ENCODE measurements at regions of chr11 and their contacts with region 1.

Region 1: DNA sequence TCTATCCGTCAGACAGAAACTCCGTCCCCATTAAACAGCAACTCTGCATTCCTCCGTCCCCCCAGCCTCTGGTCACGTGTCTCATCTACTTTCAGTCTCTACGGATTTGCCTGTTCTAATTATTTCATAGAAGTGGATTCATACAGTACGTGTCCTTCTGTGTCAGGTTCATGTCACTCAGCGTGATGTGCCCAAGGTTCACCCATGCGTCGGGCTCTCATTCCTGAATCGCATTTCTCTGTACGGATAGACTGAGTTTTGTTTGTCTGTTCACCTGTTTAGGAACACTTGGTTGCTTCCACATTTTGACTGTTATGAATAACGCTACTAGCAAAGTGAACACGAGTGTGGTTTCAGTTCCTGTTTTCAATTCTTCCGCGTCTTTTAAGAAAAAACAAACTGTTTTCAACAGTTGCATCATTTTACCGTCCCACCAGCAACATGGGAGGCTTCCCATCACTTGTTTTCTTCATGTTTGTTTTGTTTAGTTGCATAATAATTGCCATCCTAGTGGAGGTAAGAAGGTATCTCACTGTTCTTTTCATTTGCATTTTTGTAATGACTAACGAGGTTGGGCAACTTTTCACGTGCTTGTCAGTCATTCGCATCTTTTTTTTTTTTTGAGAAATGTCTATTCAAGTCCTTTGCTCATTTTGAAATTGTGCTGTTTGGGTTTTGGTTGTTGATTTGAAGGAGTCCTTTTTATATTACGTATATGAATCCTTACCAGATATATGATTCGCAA is 8.9 kb upstream of the NLRP6 start:
- DNase-seq: peak; percentile 67
- H3K4me3 Mint-ChIP-seq: peak overlapping the region; percentile 88
- H3K27ac Mint-ChIP-seq: peak overlapping the region; percentile 98
- H3K4me1 Mint-ChIP-seq: peaks cover 36% of the 10 kb centered on the region
- H3K27me3 Mint-ChIP-seq: peaks cover 13% of the 10 kb centered on the region

Region 2: DNA sequence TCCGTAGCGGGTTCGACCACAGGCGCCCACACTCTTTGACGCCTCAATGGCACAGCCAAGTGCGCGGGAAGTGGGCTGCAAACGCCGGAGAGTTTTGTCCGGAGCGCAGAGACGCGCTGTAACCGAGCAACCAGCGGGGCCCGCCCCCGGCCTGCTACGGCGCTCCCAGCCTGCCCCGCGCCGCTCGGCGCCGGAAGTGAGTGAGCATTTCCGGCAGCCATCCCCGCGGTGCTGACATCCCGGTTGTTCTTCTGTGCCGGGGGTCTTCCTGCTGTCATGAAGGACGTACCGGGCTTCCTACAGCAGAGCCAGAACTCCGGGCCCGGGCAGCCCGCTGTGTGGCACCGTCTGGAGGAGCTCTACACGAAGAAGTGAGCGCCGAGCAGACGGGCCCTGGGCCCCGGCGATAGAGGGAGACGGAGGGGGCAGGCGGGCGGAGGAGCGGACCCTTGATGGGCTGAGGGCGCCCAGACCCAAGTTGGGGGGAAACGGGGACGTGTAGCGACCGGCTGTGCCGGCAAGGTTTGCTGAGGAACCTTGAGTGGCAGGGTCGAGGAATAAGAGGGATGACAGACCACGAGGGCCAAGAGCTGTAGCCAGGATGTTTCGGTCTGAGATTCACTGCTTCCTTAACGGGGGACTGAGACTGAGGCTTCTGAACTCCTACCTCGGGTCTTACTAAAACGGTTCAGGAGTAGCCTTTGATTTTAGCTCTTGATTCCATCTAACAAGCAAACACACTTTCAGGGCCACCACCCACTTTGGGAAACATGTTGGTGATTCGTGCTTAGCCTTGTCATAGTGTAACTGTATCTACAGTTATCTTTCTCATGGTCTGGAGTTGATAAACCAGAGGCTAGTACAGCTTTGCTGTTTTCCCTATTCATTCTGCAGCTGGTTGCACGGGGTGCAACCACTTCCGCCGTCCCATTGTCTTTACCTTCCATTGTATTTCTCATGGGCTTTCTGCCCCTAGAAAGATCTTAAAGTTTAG is 32.2 kb before region 1 on chr11 and contains the start of gene PSMD13:
- CTCF ChIA-PET with region 1: interaction called, 3 read pairs
- POLR2A ChIA-PET with region 1: interaction called, 26 read pairs
- DNase-seq: peak; percentile 90
- H3K4me3 Mint-ChIP-seq: peak within 1 kb of the TSS; percentile 92
- H3K27ac Mint-ChIP-seq: peak within 1 kb of the TSS; percentile 98
- H3K4me1 Mint-ChIP-seq: peaks cover 49% of the 10 kb centered on the region
- H3K27me3 Mint-ChIP-seq: no peaks in the 10 kb centered on the region
- total RNA-seq, gene PSMD13: 156 to 160 TPM

Region 3: DNA sequence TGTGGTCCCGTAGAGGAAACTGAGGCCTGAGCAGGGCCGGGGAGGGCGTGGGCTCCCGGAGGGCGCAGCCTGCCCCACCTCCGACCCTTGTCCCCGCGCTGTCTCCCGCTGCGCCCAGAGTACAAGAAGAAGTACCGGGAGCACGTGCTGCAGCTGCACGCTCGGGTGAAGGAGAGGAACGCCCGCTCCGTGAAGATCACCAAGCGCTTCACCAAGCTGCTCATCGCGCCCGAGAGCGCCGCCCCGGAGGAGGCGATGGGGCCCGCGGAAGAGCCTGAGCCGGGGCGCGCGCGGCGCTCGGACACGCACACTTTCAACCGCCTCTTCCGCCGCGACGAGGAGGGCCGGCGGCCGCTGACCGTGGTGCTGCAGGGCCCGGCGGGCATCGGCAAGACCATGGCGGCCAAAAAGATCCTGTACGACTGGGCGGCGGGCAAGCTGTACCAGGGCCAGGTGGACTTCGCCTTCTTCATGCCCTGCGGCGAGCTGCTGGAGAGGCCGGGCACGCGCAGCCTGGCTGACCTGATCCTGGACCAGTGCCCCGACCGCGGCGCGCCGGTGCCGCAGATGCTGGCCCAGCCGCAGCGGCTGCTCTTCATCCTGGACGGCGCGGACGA is 10.8 kb after region 1 on chr11:
- CTCF ChIA-PET with region 1: no interaction called
- POLR2A ChIA-PET with region 1: interaction called, 75 read pairs
- DNase-seq: peak; percentile 54
- H3K4me3 Mint-ChIP-seq: peak overlapping the region; percentile 69
- H3K27ac Mint-ChIP-seq: peak overlapping the region; percentile 66
- H3K4me1 Mint-ChIP-seq: peaks cover 47% of the 10 kb centered on the region
- H3K27me3 Mint-ChIP-seq: peaks cover 68% of the 10 kb centered on the region

Region 4: DNA sequence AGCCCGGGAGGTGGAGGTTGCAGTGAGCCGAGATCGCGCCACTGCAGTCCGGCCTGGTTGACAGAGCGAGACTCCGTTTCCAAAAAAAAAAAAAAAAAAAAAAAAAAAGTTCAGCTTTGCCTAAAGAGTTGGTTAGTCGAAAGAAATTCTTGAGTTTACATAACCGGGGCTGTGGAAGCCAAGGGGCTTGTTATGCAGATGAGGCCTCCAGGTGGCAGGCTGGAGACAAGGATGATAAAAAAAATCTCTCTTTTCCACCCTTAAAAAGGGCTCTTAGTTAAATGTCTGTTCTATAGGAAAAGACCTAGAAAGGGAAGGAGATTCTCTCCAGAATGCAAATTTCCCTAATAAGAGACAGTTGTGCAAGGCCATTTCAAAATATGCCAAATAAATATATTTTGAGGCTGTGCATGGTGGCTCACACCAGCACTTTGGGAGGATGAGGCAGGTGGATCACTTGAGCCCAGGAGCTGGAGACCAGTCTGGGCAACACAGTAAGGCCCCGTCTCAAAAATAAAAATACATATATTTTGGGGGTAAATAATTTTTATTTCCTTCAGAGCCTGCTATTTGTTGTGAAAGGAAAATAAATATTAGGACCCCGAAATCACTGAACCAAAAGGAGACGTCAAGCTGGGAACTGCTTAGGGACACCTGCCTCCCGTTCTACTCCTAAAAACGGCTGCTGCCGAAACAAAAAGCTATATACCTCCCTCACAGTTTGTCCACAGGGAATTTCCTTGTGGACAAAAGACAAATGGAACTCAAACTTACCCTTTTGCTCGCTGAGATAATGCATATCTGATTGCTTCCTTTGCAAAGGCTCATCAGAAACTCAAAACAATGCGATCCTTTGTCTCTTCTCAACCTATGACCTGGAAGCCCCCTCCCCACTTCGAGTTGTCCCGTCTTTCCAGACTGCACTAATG is 35.9 kb after region 1 on chr11:
- CTCF ChIA-PET with region 1: interaction called, 3 read pairs
- POLR2A ChIA-PET with region 1: interaction called, 18 read pairs
- DNase-seq: peak; percentile 73
- H3K4me3 Mint-ChIP-seq: no peak overlapping the region
- H3K27ac Mint-ChIP-seq: no peak overlapping the region
- H3K4me1 Mint-ChIP-seq: peaks cover 33% of the 10 kb centered on the region
- H3K27me3 Mint-ChIP-seq: peaks cover 11% of the 10 kb centered on the region

Region 5: DNA sequence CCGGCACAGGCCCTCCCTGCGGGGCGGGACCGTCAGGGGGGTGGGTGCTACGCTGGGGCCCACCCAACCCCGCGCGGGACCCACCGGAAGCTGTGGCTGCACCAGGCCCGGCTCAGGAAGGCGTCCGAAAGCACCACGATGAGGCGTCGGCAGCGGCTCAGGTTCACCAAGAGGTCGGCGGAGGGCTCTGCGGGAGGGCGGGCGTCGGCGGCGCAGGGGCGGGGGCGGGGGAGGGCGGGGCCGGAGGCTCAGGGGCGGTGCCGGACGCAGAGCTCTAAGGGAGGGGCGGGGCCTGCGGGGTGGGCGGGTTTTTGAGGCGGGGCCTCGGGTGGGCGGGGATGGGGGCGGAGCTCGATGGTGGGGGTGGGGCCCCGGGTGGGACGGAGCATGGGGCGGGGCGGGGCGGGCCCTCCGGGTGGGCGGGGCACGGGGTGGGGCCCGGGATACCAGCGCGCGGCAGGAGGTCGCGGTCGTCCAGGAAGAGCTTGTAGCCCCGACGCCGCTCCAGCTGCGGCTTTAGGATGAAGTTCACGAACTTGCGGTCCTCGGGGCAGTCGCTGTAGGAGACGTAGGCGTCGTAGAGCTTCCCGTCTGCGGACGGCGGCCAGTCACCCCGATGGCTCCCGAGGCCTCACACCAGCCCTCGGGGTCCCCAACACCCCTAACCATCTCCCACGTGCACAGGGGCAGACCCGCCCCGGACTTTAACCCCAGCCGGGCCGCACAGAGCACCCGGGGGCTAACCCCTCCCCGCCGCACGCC is 137.8 kb after region 1 on chr11:
- CTCF ChIA-PET with region 1: no interaction called
- POLR2A ChIA-PET with region 1: interaction called, 11 read pairs
- DNase-seq: peak; percentile 93
- H3K4me3 Mint-ChIP-seq: peak overlapping the region; percentile 32
- H3K27ac Mint-ChIP-seq: no peak overlapping the region
- H3K4me1 Mint-ChIP-seq: peaks cover 12% of the 10 kb centered on the region
- H3K27me3 Mint-ChIP-seq: no peaks in the 10 kb centered on the region

Measured in activated CD4-positive, alpha-beta memory T cell treated with anti-CD3 and anti-CD28 coated beads, Interleukin-2, amount 10 ng/mL, durations not matched to agents 7 days and 5 days (primary cell).